A673 (cell line): ENCODE measurements at regions of chr1 and their contacts with region 1.

Region 1: DNA sequence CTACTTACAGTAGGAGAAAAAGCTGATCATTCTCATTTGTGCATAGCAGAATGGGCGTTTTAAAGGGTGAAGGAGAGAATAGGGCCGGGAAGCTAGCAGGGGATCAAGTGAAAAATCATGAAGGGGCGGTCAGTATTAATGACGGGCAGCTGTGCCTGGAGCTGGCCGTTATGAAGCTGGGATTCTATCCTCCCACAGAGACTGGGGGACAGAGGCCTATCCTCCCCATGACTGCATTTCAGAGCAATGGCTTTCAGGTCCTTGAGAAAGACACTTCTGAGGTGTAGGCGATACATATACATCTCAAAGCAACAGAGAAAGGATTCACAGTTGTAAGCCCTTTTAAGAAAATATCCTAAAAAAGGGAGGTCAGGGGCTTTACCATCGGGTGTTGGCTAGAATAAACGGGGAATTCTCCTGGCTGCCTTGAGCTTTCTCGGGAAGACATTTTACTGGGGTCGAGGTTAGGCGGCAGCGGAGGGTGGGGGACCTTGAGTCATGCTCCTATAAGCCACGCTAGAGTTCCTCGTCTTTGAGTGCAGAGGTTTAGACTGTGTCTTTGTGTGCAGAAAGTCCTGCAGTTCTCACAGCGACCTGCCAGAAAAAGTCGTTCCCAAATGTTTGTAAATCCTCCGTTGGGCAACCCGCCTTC is 559 bp upstream of the MTARC2 start:
- DNase-seq: no peak
- H3K4me3 ChIP-seq: no peak overlapping the region
- H3K27ac ChIP-seq: no peak overlapping the region
- H3K4me1 ChIP-seq: no peaks in the 10 kb centered on the region
- H3K27me3 ChIP-seq: peaks cover 34% of the 10 kb centered on the region
- CTCF ChIP-seq: no peak

Region 2: DNA sequence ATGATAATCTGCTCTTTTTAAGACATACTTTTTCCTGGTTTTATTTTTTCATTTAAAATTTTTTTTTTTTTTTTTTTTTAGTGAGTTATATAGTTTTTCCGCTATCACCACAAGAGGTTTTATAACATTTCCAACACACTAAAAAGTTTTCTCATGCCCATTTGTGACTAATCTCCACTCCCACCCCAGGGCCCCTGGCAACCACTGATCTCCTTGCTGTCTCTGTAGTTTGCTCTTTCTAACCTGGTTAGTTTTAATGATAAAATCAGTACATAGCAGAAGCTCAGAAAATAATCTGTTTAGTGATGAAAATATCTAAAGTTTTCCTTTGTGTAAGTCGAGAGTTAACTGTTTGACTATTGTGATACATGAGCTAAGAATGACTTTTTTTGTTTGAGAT is 611.8 kb before region 1 on chr1:
- CTCF ChIA-PET with region 1: no interaction called
- POLR2A ChIA-PET with region 1: interaction called, 13 read pairs
- intact Hi-C with region 1: no loop called
- DNase-seq: no peak
- H3K4me3 ChIP-seq: no peak overlapping the region
- H3K27ac ChIP-seq: no peak overlapping the region
- H3K4me1 ChIP-seq: no peaks in the 10 kb centered on the region
- H3K27me3 ChIP-seq: no peaks in the 10 kb centered on the region
- CTCF ChIP-seq: no peak

Region 3: DNA sequence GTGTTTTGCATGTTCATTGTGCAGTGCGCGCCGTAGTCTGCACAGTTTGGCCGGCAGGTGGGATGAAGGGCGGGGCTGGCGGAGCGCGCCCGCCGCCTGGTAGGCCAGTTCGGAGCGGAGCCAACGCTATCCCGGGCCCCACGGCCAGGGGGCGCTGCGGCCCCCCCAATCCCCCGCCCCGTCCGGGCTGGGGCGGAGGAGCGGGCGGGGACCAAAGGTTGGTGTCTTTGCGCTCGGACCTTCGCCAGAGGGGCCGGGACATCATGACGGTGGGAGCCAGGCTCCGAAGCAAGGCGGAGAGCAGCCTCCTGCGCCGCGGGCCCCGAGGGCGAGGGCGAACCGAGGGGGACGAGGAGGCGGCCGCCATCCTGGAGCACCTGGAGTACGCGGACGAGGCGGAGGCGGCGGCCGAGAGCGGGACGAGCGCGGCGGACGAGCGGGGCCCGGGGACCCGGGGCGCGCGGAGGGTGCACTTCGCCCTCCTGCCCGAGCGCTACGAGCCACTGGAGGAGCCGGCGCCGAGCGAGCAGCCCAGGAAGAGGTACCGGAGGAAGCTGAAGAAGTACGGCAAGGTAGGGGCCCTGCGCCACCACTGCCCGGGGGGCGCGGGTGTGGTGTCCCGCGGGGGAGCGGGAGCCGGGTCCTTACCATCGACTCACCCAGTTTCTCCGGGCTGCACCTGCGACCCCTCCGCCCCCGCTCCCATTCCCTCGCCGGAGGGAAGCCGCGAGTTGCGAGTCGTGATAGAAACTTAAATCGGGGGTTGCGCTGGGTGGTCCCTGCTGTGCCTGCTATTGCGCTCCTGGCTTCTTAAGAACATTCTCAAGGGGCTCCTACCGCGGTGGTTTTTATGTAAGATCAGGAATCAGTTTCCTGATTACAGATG is 57.2 kb before region 1 on chr1 and contains the start of gene C1orf115:
- CTCF ChIA-PET with region 1: no interaction called
- POLR2A ChIA-PET with region 1: no interaction called
- intact Hi-C with region 1: no loop called
- DNase-seq: peak; percentile 62
- H3K4me3 ChIP-seq: peak within 1 kb of the TSS; percentile 49
- H3K27ac ChIP-seq: no peak within 1 kb of the TSS
- H3K4me1 ChIP-seq: peaks cover 4% of the 10 kb centered on the region
- H3K27me3 ChIP-seq: peaks cover 51% of the 10 kb centered on the region
- CTCF ChIP-seq: peak; percentile 88
- total RNA-seq, gene C1orf115: 0.11 and 0.44 TPM in 2 replicates

Region 4: GRCh38 chr1:220770245-220770918 is 22.8 kb after region 1 on chr1:
- CTCF ChIA-PET with region 1: no interaction called
- POLR2A ChIA-PET with region 1: no interaction called
- intact Hi-C with region 1: no loop called
- DNase-seq: no peak
- H3K4me3 ChIP-seq: no peak overlapping the region
- H3K27ac ChIP-seq: no peak overlapping the region
- H3K4me1 ChIP-seq: no peaks in the 10 kb centered on the region
- H3K27me3 ChIP-seq: no peaks in the 10 kb centered on the region
- CTCF ChIP-seq: no peak